Endothelial cell of umbilical vein (primary cell): ENCODE measurements at regions of chr2 and their contacts with region 1.

Region 1: DNA sequence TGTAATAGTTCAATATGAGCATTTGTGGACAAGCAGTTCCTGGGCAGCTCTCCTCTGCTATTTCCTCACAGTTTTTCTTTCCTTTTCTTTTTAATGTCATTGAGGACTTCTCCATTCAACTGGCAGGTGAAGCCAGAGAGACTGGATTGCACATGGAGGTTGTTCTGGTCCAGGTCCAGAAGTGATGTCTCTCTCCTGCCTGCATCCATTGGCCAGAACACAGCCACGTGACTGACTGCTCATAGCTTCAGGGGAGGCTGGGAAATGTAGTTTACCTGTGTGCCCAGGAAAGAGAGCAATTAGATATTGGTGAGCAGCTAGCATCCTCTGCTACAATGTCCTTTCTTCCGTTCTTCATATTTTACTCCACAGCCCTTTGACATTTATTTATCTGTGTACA is 20.2 kb upstream of the ADAM23 start:
- DNase-seq: peak; percentile 62
- H3K4me3 ChIP-seq: no peak overlapping the region
- H3K27ac ChIP-seq: peak overlapping the region; percentile 25
- H3K4me1 ChIP-seq: peaks cover 32% of the 10 kb centered on the region
- H3K27me3 ChIP-seq: no peaks in the 10 kb centered on the region
- CTCF ChIP-seq: no peak
- POLR2A ChIP-seq: no peak

Region 2: GRCh38 chr2:206274434-206275268 is 148.5 kb before region 1 on chr2 and contains the start of gene ZDBF2:
- CTCF ChIA-PET with region 1: no interaction called
- POLR2A ChIA-PET with region 1: no interaction called
- dilution Hi-C with region 1: no loop called
- intact Hi-C with region 1: loop called (anchors 5 kb)
- DNase-seq: peak; percentile 73
- H3K4me3 ChIP-seq: peak within 1 kb of the TSS; percentile 69 to 93 (median 90)
- H3K27ac ChIP-seq: peak within 1 kb of the TSS; percentile 50
- H3K4me1 ChIP-seq: peaks cover 19% of the 10 kb centered on the region
- H3K27me3 ChIP-seq: peaks cover 31 to 77% of the 10 kb centered on the region in 2 experiments
- CTCF ChIP-seq: no peak
- POLR2A ChIP-seq: peak; percentile 62
- total RNA-seq, gene ZDBF2: 9.6 and 9.9 TPM in 2 replicates

Region 3: DNA sequence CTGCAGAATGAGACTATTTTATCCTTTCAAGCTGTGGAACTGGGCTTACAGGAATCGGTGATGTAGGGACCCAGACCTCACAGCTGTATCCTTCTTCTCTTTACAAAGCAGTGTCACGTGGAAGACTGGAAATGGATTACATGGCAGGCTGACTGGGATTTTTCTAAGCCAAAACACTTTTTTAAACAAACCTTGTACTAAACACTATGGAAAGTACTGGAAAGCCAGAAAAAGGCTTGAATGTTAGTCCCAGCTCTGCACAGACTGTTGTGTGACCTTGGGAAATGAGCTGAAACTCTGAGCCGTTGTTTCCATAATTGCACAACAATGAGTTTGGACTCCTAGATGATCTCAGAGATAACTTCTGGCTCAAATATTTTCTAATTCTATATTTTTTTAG is 12.6 kb after region 1 on chr2:
- CTCF ChIA-PET with region 1: interaction called, 20 read pairs
- POLR2A ChIA-PET with region 1: interaction called, 5 read pairs
- dilution Hi-C with region 1: no loop called
- intact Hi-C with region 1: no loop called
- DNase-seq: peak; percentile 93
- H3K4me3 ChIP-seq: no peak overlapping the region
- H3K27ac ChIP-seq: no peak overlapping the region
- H3K4me1 ChIP-seq: peaks cover 6% of the 10 kb centered on the region
- H3K27me3 ChIP-seq: no peaks in the 10 kb centered on the region
- CTCF ChIP-seq: no peak
- POLR2A ChIP-seq: no peak

Region 4: DNA sequence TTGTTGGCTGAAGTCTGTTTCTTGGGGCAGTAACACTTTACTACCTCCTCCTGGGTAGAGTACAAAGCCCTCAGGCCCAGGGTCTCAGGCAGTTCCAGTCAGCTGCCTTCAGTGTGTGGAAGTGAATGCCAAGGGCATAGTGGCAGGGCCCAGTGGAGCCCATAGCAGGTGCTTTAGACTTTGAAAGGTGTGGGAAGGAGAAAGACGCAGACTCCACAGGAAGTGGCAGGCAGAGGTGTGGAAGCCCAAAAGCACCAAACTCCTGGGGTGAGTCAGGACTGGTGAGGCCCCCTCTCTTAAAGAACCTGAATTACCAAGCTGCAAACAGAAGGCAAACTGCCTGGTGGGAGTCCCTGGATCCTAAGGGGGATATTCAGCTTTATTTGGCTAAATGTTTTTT is 65.5 kb after region 1 on chr2:
- CTCF ChIA-PET with region 1: no interaction called
- POLR2A ChIA-PET with region 1: no interaction called
- dilution Hi-C with region 1: no loop called
- intact Hi-C with region 1: no loop called
- DNase-seq: no peak
- H3K4me3 ChIP-seq: no peak overlapping the region
- H3K27ac ChIP-seq: no peak overlapping the region
- H3K4me1 ChIP-seq: no peaks in the 10 kb centered on the region
- H3K27me3 ChIP-seq: no peaks in the 10 kb centered on the region
- CTCF ChIP-seq: no peak
- POLR2A ChIP-seq: no peak